K562 (cell line): ENCODE measurements at regions of chr1 and their contacts with region 1.

Region 1: DNA sequence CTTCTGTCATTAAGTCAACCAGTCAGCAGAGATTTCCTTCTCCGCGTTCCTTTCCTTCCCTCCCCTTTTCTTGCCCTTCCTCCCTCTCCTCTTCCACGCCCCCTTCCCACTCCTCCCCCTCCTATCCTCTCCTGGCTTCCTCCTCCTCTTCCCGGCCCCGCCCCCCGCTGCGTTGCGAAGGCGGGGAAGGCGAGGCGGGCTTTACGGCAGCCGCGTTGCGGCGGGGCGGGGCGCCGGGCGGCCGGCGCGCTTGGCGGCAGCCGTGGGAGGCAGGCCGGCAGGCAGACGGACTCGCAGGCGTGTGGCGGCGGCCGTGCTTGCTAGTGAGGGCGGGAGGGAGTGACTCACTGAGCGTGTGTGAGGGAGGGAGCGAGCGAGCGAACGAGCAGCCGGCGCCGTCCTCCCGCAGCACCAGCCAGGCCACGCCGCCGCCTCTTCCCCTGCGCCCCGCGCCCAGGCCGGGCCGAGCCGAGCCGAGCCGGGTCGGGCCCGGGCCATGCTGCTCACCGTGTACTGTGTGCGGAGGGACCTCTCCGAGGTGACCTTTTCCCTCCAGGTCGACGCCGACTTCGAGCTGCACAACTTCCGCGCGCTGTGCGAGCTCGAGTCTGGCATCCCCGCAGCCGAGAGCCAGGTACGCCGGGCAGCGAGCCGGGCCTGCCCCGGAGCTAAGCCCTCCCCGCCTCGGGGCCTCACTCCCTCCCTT is at the start of gene DDI2:
- DNase-seq: peak; percentile 97 to 99 (median 98)
- ATAC-seq: peak; percentile 95
- H3K4me3 ChIP-seq: peak within 1 kb of the TSS; percentile 94
- H3K27ac ChIP-seq: peak within 1 kb of the TSS; percentile 83
- H3K4me1 ChIP-seq: peaks cover 23 to 31% of the 10 kb centered on the region in 2 experiments
- H3K27me3 ChIP-seq: no peaks in the 10 kb centered on the region
- CTCF ChIP-seq: 0 out of 6 replicates have a peak, but pooled peaks of 1 of the 3 experiments have one; percentile 0
- EP300 ChIP-seq: peak; percentile 7; the same call in 1 of the 2 replicates
- POLR2A ChIP-seq: peak; percentile 74
- RAD21 ChIP-seq: 0 out of 4 replicates have a peak, but pooled peaks of 1 of the 2 experiments have one; percentile 5
- polyA plus RNA-seq, gene DDI2: 6.5 to 7.3 TPM

Region 2: GRCh38 chr1:15526490-15527339 is 90.6 kb before region 1 on chr1 and contains the start of gene DNAJC16:
- CTCF ChIA-PET with region 1: no interaction called
- POLR2A ChIA-PET with region 1: interaction called, 3 read pairs
- in situ Hi-C with region 1: no loop called
- intact Hi-C with region 1: loop called (anchors 2 kb)
- DNase-seq: peak; percentile 92 to 100 (median 93)
- ATAC-seq: peak; percentile 83
- H3K4me3 ChIP-seq: peak within 1 kb of the TSS; percentile 77
- H3K27ac ChIP-seq: peak within 1 kb of the TSS; percentile 77
- H3K4me1 ChIP-seq: peaks cover 7 to 25% of the 10 kb centered on the region in 2 experiments; a peak in 4 of 5 replicates
- H3K27me3 ChIP-seq: no peaks in the 10 kb centered on the region
- CTCF ChIP-seq: peak; percentile 31 to 63 (median 57); a peak in 4 of 6 replicates
- EP300 ChIP-seq: peak; percentile 34
- POLR2A ChIP-seq: peak; percentile 97
- RAD21 ChIP-seq: no peak
- polyA plus RNA-seq, gene DNAJC16: 6.9 to 8.6 TPM

Region 3: DNA sequence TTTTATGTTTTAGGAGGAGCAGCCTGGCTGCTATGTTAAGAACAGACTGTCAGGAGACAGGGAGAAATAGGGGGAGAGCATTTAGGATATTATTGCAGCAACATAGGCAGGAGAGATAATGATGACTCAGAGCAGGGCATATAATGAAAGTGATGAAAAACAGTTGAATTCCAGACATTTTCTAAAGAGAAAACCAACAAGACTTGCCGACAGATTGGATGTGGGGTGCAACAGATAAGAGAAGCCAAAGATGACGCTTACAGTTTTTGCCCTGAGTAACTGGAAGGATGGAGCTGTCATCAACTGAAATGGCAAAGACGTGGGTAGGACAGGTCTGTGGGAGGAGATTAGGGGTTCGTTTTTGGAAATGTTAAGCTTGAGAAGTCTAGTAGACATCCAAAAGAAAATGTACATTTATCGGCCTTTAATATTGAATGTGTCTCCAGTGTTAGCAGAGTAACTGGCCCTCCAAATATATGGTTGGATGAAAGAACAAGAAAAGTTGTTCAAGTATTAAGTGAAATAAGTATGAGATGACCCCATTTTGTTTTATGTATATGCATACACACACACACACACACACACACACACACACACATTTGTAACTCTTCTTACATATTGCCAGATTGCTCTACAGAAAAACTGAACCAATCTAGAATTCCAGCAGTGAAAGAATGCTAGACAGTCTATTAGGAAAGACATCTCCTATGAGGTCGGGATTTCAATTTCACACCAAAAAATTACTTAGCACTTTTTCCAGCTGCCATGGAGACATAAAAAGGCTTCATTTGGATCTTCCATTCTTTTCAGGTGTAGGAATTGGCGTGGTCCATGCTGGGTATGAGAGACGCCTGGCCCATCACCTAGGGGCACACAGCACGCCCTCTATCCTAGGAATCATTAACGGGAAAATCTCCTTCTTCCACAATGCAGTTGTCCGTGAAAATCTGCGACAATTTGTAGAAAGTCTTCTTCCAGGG is 73.4 kb before region 1 on chr1:
- CTCF ChIA-PET with region 1: no interaction called
- POLR2A ChIA-PET with region 1: no interaction called
- in situ Hi-C with region 1: no loop called
- intact Hi-C with region 1: loop called (anchors 5 kb)
- DNase-seq: peak; percentile 70 to 97 (median 84)
- ATAC-seq: peak; percentile 96
- H3K4me3 ChIP-seq: no peak overlapping the region
- H3K27ac ChIP-seq: peak overlapping the region; percentile 98
- H3K4me1 ChIP-seq: peaks cover 16 to 37% of the 10 kb centered on the region in 2 experiments
- H3K27me3 ChIP-seq: no peaks in the 10 kb centered on the region
- CTCF ChIP-seq: no peak
- EP300 ChIP-seq: peak; percentile 98
- POLR2A ChIP-seq: 0 out of 2 replicates have a peak, but pooled peaks have one; percentile 45
- RAD21 ChIP-seq: peak; percentile 3 to 24; a peak in 1 of 4 replicates

Region 4: GRCh38 chr1:15627343-15627988 is 10.1 kb after region 1 on chr1:
- CTCF ChIA-PET with region 1: no interaction called
- POLR2A ChIA-PET with region 1: interaction called, 17 read pairs
- in situ Hi-C with region 1: no loop called
- intact Hi-C with region 1: no loop called
- DNase-seq: peak in 2 of 4 experiments; percentile 34 to 53
- ATAC-seq: peak; percentile 72
- H3K4me3 ChIP-seq: no peak overlapping the region
- H3K27ac ChIP-seq: peak overlapping the region; percentile 74
- H3K4me1 ChIP-seq: peaks cover 12 to 48% of the 10 kb centered on the region in 2 experiments
- H3K27me3 ChIP-seq: no peaks in the 10 kb centered on the region
- CTCF ChIP-seq: no peak
- EP300 ChIP-seq: no peak
- POLR2A ChIP-seq: no peak
- RAD21 ChIP-seq: no peak

Region 5: DNA sequence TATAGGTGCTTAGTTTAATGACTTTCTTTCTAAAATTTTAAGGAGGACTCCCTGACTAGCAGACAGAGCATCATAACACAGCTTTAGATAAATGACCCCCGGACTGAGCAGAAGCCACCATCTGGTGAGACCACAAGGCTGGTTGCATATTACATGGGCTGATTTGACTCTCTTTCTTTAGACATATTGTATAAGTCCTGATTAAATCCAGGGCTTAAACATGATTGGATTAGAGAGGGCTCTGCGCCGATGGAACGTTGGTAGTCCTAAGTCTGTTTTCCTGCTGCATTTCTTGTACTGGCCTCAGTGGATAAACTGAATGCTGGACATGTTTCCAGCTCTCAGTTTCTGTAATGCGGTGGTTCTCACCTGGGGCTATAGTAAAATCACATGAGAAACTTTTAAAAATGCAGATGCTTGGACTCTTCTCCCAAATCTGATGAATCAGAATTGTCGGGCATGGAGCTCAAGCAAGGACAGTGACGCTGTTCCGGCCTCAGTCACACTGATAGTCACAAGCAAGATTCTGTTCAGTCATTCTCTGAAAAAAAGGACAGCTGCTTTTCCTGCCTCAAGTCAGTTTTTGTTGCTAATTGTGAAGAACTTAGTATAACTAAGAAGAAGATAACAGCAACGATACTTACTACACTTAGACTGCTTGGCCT is 16.6 kb after region 1 on chr1:
- CTCF ChIA-PET with region 1: no interaction called
- POLR2A ChIA-PET with region 1: interaction called, 17 read pairs
- in situ Hi-C with region 1: no loop called
- intact Hi-C with region 1: no loop called
- DNase-seq: no peak
- ATAC-seq: no peak
- H3K4me3 ChIP-seq: no peak overlapping the region
- H3K27ac ChIP-seq: no peak overlapping the region
- H3K4me1 ChIP-seq: peaks cover 0 to under 1% of the 10 kb centered on the region in 2 experiments; a peak in 3 of 5 replicates
- H3K27me3 ChIP-seq: no peaks in the 10 kb centered on the region
- CTCF ChIP-seq: no peak
- EP300 ChIP-seq: no peak
- POLR2A ChIP-seq: no peak
- RAD21 ChIP-seq: no peak